Endothelial cell of umbilical vein (primary cell): ENCODE measurements at regions of chr2 and their contacts with region 1.

Region 1: GRCh38 chr2:145669301-145669700 is 1149.4 kb upstream of the ZEB2 start:
- DNase-seq: no peak
- H3K4me3 ChIP-seq: no peak overlapping the region
- H3K27ac ChIP-seq: no peak overlapping the region
- H3K4me1 ChIP-seq: no peaks in the 10 kb centered on the region
- H3K27me3 ChIP-seq: no peaks in the 10 kb centered on the region
- CTCF ChIP-seq: no peak
- POLR2A ChIP-seq: no peak

Region 2: GRCh38 chr2:144847347-144848080 is 821.8 kb before region 1 on chr2:
- CTCF ChIA-PET with region 1: no interaction called
- POLR2A ChIA-PET with region 1: no interaction called
- dilution Hi-C with region 1: no loop called
- intact Hi-C with region 1: no loop called
- DNase-seq: no peak
- H3K4me3 ChIP-seq: no peak overlapping the region
- H3K27ac ChIP-seq: no peak overlapping the region
- H3K4me1 ChIP-seq: no peaks in the 10 kb centered on the region
- H3K27me3 ChIP-seq: no peaks in the 10 kb centered on the region
- CTCF ChIP-seq: no peak
- POLR2A ChIP-seq: no peak

Region 3: GRCh38 chr2:145657265-145657664 is 12.0 kb before region 1 on chr2:
- CTCF ChIA-PET with region 1: interaction called, 12 read pairs
- POLR2A ChIA-PET with region 1: interaction called, 6 read pairs
- dilution Hi-C with region 1: no loop called
- intact Hi-C with region 1: no loop called
- DNase-seq: no peak
- H3K4me3 ChIP-seq: no peak overlapping the region
- H3K27ac ChIP-seq: no peak overlapping the region
- H3K4me1 ChIP-seq: no peaks in the 10 kb centered on the region
- H3K27me3 ChIP-seq: no peaks in the 10 kb centered on the region
- CTCF ChIP-seq: no peak
- POLR2A ChIP-seq: no peak